ENCODE measurements at regions of chr2 and their contacts with region 1.

Region 1: DNA sequence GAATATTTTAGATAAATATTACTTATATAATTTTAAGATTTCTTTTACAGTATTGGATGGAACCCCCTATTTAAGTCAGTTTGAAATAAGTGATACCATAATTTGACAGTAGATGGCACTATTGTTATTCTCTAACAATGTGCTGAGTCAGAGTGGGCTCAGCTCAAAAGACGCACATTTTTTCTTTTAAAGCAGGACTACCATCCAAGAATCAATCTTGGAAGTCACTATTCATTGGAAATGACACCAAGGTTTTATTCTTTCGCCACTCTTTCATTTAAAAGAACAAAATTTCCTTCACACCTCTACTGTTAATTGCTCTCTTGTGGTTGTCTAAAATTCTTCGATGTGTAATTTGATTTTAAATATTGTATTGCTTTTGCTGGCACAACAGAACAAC is 32.6 kb upstream of the SPAG16 start:
- DNase-seq: no peak
- ATAC-seq: peak; percentile 77 to 88 (median 86)
- H3K4me3 ChIP-seq: no peak overlapping the region
- H3K27ac ChIP-seq: no peak overlapping the region
- H3K4me1 ChIP-seq: no peaks in the 10 kb centered on the region
- H3K27me3 ChIP-seq: no peaks in the 10 kb centered on the region
- CTCF ChIP-seq: peak; percentile 65 to 74 (median 70)
- POLR2A ChIP-seq: no peak

Region 2: GRCh38 chr2:213353419-213353818 is 101.8 kb after region 1 on chr2:
- intact Hi-C with region 1: no loop called
- DNase-seq: no peak
- ATAC-seq: no peak
- H3K4me3 ChIP-seq: no peak overlapping the region
- H3K27ac ChIP-seq: no peak overlapping the region
- H3K4me1 ChIP-seq: no peaks in the 10 kb centered on the region
- H3K27me3 ChIP-seq: no peaks in the 10 kb centered on the region
- CTCF ChIP-seq: no peak
- POLR2A ChIP-seq: no peak

Region 3: GRCh38 chr2:213934560-213934959 is 682.9 kb after region 1 on chr2:
- intact Hi-C with region 1: loop called in 1 of 2 experiments (anchors 10 kb)
- DNase-seq: no peak
- ATAC-seq: peak; percentile 55 to 75 (median 68)
- H3K4me3 ChIP-seq: no peak overlapping the region
- H3K27ac ChIP-seq: no peak overlapping the region
- H3K4me1 ChIP-seq: no peaks in the 10 kb centered on the region
- H3K27me3 ChIP-seq: no peaks in the 10 kb centered on the region
- CTCF ChIP-seq: peak; percentile 50 to 58 (median 55)
- POLR2A ChIP-seq: no peak

Measured in right lobe of liver (tissue), 6 donors.